ENCODE measurements at regions of chr9 and their contacts with region 1.

Region 1: DNA sequence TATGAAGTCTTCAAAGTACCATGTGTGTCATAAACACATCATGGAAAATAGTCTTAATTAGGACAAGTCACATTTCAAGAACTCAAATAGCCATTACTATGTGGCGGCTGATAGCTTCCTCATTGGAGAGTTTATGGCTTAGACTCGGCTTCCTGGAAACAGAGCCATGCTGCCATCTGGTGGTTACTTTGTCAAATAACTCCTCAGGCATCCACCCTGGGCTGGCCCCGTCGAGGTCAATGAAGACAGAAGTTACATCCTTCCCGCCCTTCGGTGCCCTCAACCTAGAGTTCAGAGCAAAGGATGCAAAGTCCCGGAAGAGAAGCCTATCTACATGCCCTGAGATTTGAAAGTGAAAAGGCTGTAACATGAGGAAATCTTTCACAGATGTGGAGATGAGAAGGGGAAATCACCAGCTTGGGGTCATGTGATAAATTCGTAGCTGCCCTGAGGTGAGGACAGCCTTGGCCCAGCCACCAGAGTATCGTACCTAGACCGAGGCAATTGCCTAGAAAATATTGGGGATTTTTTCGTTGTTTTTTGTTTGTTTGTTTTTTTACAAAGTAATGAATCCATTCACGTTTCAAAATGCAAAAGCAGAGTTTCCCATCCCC is 45.5 kb upstream of the ZNF169 start:
- DNase-seq: peak; percentile 69 to 73 (median 71)
- H3K4me3 ChIP-seq: no peak overlapping the region
- H3K4me3 Mint-ChIP-seq: peak overlapping the region in 4 of 8 donors; percentile 15 to 45 (median 25)
- H3K27ac ChIP-seq: no peak overlapping the region
- H3K27ac Mint-ChIP-seq: peak overlapping the region in 2 of 7 donors; percentile 17 to 44
- H3K4me1 ChIP-seq: no peaks in the 10 kb centered on the region
- H3K4me1 Mint-ChIP-seq: peaks cover 3 to 5% (median 4%) of the 10 kb centered on the region in 4 donors
- H3K27me3 ChIP-seq: peaks cover 5% of the 10 kb centered on the region
- H3K27me3 Mint-ChIP-seq: peaks cover 17 to 22% of the 10 kb centered on the region in 2 donors

Region 2: GRCh38 chr9:93893899-93894690 is 319.5 kb before region 1 on chr9:
- CTCF ChIA-PET with region 1: no interaction called
- POLR2A ChIA-PET with region 1: no interaction called
- intact Hi-C with region 1: no loop called
- DNase-seq: no peak
- H3K4me3 ChIP-seq: no peak overlapping the region
- H3K4me3 Mint-ChIP-seq: no peak overlapping the region
- H3K27ac ChIP-seq: no peak overlapping the region
- H3K27ac Mint-ChIP-seq: no peak overlapping the region
- H3K4me1 ChIP-seq: peaks cover 20% of the 10 kb centered on the region
- H3K4me1 Mint-ChIP-seq: peaks cover 12 to 20% (median 15%) of the 10 kb centered on the region in 4 donors
- H3K27me3 ChIP-seq: no peaks in the 10 kb centered on the region
- H3K27me3 Mint-ChIP-seq: no peaks in the 10 kb centered on the region

Region 3: DNA sequence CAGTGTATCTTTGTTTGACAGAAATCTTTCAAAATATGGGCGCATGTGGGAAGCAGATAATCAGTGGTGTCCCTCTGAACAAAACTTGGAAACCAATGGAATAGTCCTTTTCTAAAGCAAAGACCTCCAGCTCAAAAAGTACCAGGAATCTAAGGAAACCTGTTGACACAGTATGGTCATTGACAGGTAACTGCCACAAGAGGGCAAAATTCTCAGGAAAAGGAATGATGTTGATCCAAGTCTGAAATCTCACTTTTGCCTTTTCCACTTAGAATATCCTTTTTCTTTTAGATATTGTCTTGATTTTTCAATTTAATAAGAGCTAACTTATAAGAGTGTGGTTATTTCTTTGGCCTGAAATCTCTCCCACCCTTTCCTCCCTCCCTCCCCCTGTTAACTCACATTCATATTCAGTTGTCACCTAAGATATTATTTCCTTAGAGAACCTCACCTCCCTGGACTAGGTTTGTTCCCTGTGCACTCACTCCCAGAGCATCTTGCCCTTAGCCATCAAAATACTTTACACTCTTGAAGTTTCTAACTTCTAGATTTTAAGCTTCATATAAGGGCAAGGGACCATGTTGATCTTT is 199.5 kb before region 1 on chr9:
- CTCF ChIA-PET with region 1: interaction called, 54 read pairs
- POLR2A ChIA-PET with region 1: interaction called, 3 read pairs
- intact Hi-C with region 1: no loop called
- DNase-seq: peak in 1 of 5 donors; percentile 2
- H3K4me3 ChIP-seq: no peak overlapping the region
- H3K4me3 Mint-ChIP-seq: no peak overlapping the region
- H3K27ac ChIP-seq: no peak overlapping the region
- H3K27ac Mint-ChIP-seq: no peak overlapping the region
- H3K4me1 ChIP-seq: peaks cover 13% of the 10 kb centered on the region
- H3K4me1 Mint-ChIP-seq: peaks cover 8 to 14% (median 11%) of the 10 kb centered on the region in 4 donors
- H3K27me3 ChIP-seq: no peaks in the 10 kb centered on the region
- H3K27me3 Mint-ChIP-seq: no peaks in the 10 kb centered on the region

Region 4: DNA sequence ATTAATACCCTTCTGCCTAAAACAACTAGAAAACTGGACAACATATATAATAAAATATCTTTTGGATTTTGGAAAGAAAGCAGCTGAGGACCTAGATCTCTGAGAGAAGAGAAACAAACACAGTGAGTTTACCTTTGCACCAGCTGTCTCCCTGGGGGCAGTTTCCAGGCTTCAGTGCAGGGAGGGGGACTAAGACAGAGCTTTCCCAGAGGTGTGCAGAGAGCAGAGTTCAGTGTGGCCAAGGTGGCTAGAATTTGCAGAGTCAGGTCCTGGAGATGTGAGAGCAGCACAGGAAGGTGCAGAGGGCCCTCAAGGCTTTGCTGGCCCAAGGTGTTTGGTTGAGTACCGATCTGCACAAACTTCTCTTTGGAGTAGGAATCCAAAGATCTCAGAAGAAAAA is 155.7 kb before region 1 on chr9:
- CTCF ChIA-PET with region 1: interaction called, 255 read pairs
- POLR2A ChIA-PET with region 1: no interaction called
- intact Hi-C with region 1: no loop called
- DNase-seq: no peak
- H3K4me3 ChIP-seq: no peak overlapping the region
- H3K4me3 Mint-ChIP-seq: no peak overlapping the region
- H3K27ac ChIP-seq: no peak overlapping the region
- H3K27ac Mint-ChIP-seq: no peak overlapping the region
- H3K4me1 ChIP-seq: no peaks in the 10 kb centered on the region
- H3K4me1 Mint-ChIP-seq: no peaks in the 10 kb centered on the region
- H3K27me3 ChIP-seq: no peaks in the 10 kb centered on the region
- H3K27me3 Mint-ChIP-seq: no peaks in the 10 kb centered on the region

Region 5: DNA sequence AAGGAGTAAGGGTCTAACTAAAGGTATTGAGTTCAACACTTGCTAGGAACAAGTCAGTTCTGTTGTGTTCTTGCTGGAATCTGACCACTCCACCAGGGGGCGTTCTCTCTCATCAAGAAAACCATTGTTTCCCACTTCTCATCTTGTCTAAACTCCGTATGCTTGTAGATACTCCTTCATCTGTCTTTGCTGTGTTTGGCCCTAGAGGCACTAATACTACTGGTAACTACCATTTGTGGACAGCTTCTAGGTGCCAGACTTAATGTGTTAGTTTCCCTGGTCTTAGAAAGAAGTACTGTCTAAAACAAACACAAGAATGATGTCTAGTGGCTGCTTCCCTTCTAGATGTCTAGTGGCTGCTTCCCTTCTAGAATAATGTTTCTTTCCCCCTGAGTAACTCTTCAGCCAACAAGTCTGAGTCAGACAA is 148.1 kb before region 1 on chr9:
- CTCF ChIA-PET with region 1: interaction called, 255 read pairs
- POLR2A ChIA-PET with region 1: interaction called, 7 read pairs
- intact Hi-C with region 1: loop called (anchors 1 kb)
- DNase-seq: peak; percentile 58 to 65 (median 63)
- H3K4me3 ChIP-seq: no peak overlapping the region
- H3K4me3 Mint-ChIP-seq: no peak overlapping the region
- H3K27ac ChIP-seq: no peak overlapping the region
- H3K27ac Mint-ChIP-seq: peak overlapping the region in 1 of 7 donors; percentile 18
- H3K4me1 ChIP-seq: no peaks in the 10 kb centered on the region
- H3K4me1 Mint-ChIP-seq: peaks cover 0 to 4% (median under 1%) of the 10 kb centered on the region in 4 donors
- H3K27me3 ChIP-seq: no peaks in the 10 kb centered on the region
- H3K27me3 Mint-ChIP-seq: no peaks in the 10 kb centered on the region

Region 6: GRCh38 chr9:94112716-94113465 is 100.7 kb before region 1 on chr9:
- CTCF ChIA-PET with region 1: no interaction called
- POLR2A ChIA-PET with region 1: no interaction called
- intact Hi-C with region 1: no loop called
- DNase-seq: no peak
- H3K4me3 ChIP-seq: no peak overlapping the region
- H3K4me3 Mint-ChIP-seq: no peak overlapping the region
- H3K27ac ChIP-seq: no peak overlapping the region
- H3K27ac Mint-ChIP-seq: no peak overlapping the region
- H3K4me1 ChIP-seq: no peaks in the 10 kb centered on the region
- H3K4me1 Mint-ChIP-seq: peaks cover 0 to 1% (median 0%) of the 10 kb centered on the region in 4 donors
- H3K27me3 ChIP-seq: no peaks in the 10 kb centered on the region
- H3K27me3 Mint-ChIP-seq: no peaks in the 10 kb centered on the region

Region 7: GRCh38 chr9:94228616-94229015 is 15.0 kb after region 1 on chr9:
- CTCF ChIA-PET with region 1: interaction called, 12 read pairs
- POLR2A ChIA-PET with region 1: no interaction called
- intact Hi-C with region 1: no loop called
- DNase-seq: no peak
- H3K4me3 ChIP-seq: no peak overlapping the region
- H3K4me3 Mint-ChIP-seq: no peak overlapping the region
- H3K27ac ChIP-seq: no peak overlapping the region
- H3K27ac Mint-ChIP-seq: no peak overlapping the region
- H3K4me1 ChIP-seq: no peaks in the 10 kb centered on the region
- H3K4me1 Mint-ChIP-seq: no peaks in the 10 kb centered on the region
- H3K27me3 ChIP-seq: peaks cover 6% of the 10 kb centered on the region
- H3K27me3 Mint-ChIP-seq: peaks cover 15 to 19% of the 10 kb centered on the region in 2 donors

Measured in CD4-positive, alpha-beta memory T cell (primary cell).